Motor neuron (in vitro differentiated cells): ENCODE measurements at regions of chr20 and their contacts with region 1.

Region 1: DNA sequence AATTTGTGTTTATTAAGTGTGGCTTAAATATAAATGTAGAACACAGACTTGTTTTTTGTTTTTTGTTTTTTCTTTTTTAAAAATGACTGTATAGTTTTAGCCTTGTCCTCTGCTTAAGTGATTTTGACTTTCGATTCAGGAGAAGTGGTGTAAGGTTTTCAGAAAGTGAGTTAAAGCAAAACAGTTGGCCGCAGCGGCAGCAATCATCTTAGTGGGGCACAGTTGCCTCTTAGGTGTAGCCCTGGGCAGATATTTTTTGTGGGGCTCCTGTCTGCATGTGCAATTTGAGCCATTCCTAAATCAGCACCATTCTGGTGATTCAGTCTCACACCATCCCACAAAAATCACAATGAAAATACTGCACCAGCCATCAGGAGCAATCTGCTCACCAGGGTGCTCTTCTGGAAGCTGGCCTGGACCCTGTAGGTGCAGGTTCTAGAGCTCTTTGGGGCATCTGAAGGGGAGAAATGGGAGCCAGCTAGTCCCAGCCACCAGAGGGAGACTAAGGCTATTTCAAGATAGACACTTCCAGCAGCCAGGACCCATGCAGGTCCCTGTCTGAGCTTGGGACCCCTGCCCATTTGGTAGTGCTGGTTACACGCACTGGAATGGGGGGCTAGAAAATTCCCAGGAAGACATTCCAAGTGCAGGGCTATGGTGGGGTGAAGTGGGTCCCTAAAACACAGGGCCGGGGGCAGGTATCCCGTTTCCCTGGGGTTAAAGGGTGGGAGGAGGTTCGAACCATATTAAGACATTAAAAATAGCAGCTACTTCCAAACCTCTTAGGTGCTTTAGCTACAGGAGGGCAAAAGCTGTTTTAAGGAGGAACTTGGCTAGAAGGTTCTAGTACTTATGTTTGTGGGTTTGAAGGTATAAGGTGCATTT is 156.6 kb downstream of the NFATC2 start:
- ATAC-seq: peak in 4 of 8 experiments; percentile 37 to 80 (median 61)
- H3K4me3 ChIP-seq: no peak overlapping the region
- H3K27ac ChIP-seq: no peak overlapping the region
- H3K4me1 ChIP-seq: peaks cover 9 to 10% of the 10 kb centered on the region in 2 donors

Region 2: GRCh38 chr20:51595058-51595532 is 209.2 kb after region 1 on chr20:
- in situ Hi-C with region 1: loop called in 4 of 9 experiments (anchors 25 kb)
- ATAC-seq: peak; percentile 81 to 98 (median 92)
- H3K4me3 ChIP-seq: no peak overlapping the region
- H3K27ac ChIP-seq: no peak overlapping the region
- H3K4me1 ChIP-seq: no peaks in the 10 kb centered on the region

Region 3: DNA sequence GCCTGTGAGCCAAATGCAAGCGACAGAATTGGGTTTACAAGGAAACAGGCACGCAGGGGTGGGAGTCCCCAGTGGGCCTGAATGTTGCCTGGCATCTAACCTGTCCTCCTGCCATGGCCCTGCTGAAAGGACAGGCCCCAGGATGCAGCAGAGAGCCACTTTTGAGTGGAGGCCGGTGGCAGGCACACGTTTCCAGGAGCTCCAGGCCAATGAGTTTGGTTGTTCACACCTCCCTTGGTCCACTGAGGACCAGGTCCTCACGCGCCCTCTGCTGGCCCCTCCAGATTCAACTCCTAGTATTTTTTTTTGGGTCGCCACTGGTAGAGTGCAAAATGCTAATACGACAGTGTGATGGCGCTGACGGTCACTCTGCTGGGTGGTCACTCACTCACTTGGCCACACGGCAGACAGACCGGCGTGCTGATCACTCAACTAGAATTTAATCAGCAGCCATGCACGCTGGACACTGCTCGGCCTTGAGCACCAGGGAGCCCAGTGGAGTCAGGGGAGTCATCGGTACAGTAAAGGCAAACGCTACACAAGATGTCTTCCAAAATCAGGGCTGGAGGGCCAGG is 238.4 kb after region 1 on chr20:
- in situ Hi-C with region 1: loop called in 3 of 9 experiments (anchors 25 kb)
- ATAC-seq: peak; percentile 29 to 86 (median 65)
- H3K4me3 ChIP-seq: no peak overlapping the region
- H3K27ac ChIP-seq: no peak overlapping the region
- H3K4me1 ChIP-seq: no peaks in the 10 kb centered on the region